Head of caudate nucleus (tissue), 42 donors: ENCODE measurements at regions of chr12 and their contacts with region 1.

Region 1: DNA sequence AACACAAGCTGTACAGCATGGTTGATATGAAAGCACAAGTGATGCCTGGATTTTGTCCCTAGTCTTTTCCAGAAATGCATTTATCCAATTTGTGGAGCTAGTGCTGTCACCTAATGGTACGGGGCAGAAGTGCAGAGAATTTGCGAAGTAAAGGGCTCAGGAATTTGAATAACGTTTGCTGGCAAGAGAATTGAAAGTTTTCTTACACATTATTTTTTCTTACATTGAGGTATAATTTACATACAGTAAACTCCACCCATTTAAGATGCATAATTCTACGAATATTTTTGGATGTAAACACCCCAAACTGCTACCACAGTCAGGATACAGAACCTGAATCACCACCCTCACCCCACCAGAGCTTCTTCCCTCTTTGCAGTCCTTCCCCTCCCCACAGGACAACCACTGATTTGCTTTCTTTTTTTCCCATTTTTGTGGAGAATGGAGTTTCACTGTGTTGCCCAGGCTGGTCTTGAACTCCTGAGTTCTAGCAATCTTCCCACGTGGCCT is 3.5 kb downstream of the AICDA start:
- DNase-seq: peak in 25 of 42 donors; percentile 10 to 65 (median 30)

Region 2: GRCh38 chr12:8544295-8544694 is 64.8 kb before region 1 on chr12:
- intact Hi-C with region 1: loop called (anchors 5 kb)
- DNase-seq: peak; percentile 18 to 89 (median 72)